OCI-LY7 (cell line): ENCODE measurements at regions of chr3 and their contacts with region 1.

Region 1: DNA sequence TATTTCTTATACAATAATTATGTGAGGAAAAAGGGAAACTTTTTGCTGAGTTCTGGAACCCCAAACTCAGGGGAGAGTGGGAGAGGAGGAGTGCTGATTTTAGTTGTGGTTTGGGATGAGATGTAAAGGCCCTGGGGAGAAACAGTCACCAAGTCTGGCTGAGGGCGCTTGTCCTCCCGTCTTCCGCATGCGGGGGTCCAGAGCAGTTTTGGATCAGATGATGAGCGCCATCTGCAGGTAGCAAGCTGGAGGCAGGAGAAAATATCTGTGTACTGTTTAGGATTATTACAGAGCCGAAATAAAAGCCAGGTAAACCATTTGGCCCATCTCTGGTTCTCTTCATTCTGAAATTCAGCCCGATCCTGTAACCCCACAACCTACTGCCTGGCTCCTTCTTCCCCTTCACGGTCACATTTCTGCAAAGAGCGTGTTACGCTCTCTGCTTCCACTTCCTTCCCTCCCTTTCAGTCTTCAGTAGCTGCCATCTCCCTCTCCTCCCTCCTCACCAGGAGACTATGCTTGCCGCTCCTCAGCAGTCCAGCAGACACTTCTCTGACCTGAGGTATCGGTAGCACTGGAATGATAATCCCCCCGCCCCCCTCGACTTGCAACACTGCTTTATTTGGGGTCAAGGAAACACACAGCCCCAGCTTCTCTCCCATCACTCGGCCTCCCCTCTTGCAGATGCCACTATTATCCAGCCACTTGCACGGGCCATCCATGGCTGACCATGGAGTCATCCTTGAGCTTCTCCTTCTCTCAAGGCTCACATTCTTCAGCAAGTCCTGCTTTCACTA is 1.4 kb upstream of the PARP14 start:
- DNase-seq: peak; percentile 82
- H3K4me3 ChIP-seq: peak overlapping the region; percentile 76
- H3K27ac ChIP-seq: no peak overlapping the region
- H3K4me1 ChIP-seq: peaks cover 38% of the 10 kb centered on the region
- CTCF ChIP-seq: peak; percentile 93

Region 2: DNA sequence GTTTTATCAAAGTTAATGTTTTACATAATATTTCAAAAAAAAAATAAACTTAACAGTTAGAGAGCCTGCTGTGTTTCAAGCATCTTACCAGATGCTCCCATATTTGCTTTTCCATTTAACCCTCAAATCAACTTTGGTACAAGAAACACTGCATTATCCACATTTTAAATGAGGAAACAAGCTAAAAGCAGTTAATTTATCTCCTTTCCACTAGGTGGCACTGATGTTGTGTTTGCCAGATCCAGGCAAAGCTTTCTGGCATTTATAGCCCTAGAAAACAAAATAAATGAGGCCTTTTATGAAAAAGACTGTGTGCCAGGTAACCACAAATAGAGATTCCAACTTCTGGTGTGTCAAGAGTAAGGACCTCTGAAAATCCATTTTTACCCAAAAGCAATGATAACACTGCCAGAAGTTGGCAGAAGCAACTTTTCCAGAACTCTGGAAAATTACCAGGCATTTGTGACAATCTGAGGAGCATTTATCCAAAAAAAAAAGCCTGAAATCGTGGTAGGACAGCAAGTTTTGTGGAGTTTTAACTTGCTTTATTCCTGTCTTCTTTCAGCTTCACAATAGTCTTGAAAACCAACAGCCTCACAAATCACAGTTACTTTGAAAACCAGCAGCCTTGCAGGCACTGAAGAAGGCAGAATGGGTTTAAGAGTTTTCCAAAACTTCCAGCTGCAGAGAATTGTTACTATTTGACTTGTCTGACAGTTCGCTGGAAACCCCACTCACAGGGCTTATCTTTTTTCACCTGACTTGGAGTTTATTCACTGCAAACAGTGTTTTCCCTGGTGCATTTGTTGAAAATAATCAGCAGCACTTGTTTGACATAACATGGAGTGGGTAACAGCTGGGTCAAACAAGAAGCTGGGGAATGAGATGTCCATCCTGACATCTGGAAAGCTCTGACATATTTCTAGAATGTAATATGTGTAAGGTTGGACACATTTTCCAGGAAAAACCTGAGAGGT is 286.1 kb before region 1 on chr3:
- CTCF ChIA-PET with region 1: no interaction called
- POLR2A ChIA-PET with region 1: interaction called, 3 read pairs
- intact Hi-C with region 1: loop called (anchors 1 kb)
- DNase-seq: peak; percentile 70
- H3K4me3 ChIP-seq: no peak overlapping the region
- H3K27ac ChIP-seq: no peak overlapping the region
- H3K4me1 ChIP-seq: peaks cover 5% of the 10 kb centered on the region
- CTCF ChIP-seq: peak; percentile 95

Region 3: DNA sequence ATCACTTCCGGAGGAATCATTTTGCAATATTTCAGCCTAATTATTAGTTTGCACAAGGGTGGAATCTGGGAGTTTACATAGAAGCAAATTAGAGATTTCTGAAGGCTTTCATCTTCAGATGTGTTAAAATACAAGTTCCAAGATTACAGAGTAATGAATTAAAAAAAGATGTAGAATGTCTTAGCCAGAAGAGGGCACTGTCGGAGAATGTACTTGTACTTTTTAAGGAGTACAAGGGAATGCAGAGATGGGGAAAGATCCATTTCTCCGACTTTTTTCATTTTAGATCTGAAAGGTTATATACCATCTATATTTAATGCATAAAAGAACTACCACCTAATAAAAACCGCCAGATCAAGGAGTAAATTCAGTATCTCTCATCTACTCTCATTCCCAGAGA is 220.3 kb before region 1 on chr3:
- CTCF ChIA-PET with region 1: no interaction called
- POLR2A ChIA-PET with region 1: no interaction called
- intact Hi-C with region 1: loop called (anchors 1 kb)
- DNase-seq: peak; percentile 51
- H3K4me3 ChIP-seq: no peak overlapping the region
- H3K27ac ChIP-seq: no peak overlapping the region
- H3K4me1 ChIP-seq: no peaks in the 10 kb centered on the region
- CTCF ChIP-seq: peak; percentile 85

Region 4: DNA sequence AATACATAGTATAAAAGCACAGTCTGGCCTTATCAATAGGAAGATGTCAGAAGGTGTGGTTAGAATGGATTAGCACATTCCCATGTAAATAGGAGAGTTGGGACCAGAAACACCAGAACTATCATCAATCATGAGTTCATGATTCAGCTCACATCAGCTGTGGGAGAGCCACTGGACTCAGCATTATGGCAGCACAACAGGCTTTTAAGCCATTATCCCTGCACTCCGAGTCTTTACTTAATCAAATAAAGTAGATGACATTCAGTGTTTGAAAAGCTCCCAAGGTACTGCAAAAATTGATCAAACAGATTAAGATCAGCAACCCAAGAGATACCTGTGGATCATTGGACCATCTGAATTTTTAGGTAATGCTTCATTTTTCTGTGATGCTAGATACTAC is 26.1 kb after region 1 on chr3:
- CTCF ChIA-PET with region 1: no interaction called
- POLR2A ChIA-PET with region 1: no interaction called
- intact Hi-C with region 1: no loop called
- DNase-seq: no peak
- H3K4me3 ChIP-seq: no peak overlapping the region
- H3K27ac ChIP-seq: no peak overlapping the region
- H3K4me1 ChIP-seq: peaks cover 8% of the 10 kb centered on the region
- CTCF ChIP-seq: no peak